Head of caudate nucleus (tissue), 42 donors: ENCODE measurements at regions of chr5 and their contacts with region 1.

Region 1: GRCh38 chr5:117242028-117242427 is 667.4 kb upstream of the SEMA6A start:
- DNase-seq: no peak

Region 2: GRCh38 chr5:117195076-117195475 is 47.0 kb before region 1 on chr5:
- intact Hi-C with region 1: loop called (anchors 10 kb)
- DNase-seq: no peak